Activated CD4-positive, alpha-beta T cell treated with anti-CD3 and anti-CD28 coated beads for 36 hours (primary cell): ENCODE measurements at regions of chr21 and their contacts with region 1.

Region 1: DNA sequence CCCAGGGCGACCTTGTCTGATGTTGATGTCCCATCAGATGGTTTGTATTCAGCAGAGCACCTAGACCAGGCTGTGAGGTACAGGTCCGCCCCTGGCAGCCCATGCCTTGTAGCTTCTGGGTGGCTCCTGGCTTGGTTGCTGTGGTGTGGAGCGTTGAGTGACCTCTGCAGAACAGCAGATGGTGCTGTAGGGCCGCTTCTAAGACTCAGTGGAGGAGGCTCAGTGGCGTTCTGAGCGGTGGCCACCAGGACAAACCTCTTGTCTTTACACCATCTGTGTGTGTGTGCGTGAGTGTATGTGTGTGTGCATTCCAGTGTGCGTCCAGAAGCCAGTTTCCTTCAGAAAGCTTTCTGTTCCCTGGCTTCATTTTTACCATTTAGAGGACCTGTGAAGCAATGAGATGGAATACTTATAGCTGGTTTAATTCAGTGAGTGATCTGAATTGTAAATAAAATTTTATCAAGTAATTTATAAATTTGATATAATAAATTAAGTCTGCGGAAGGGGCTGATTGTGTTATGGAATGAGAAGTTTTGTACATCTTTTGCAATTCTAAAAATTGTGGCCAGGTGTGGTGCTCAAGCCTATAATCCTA is 66.1 kb downstream of the ADARB1 start:
- DNase-seq: peak; percentile 82
- ATAC-seq: peak; percentile 94
- H3K4me3 Mint-ChIP-seq: no peak overlapping the region
- H3K27ac Mint-ChIP-seq: no peak overlapping the region
- H3K4me1 Mint-ChIP-seq: peaks cover 9% of the 10 kb centered on the region
- H3K27me3 Mint-ChIP-seq: no peaks in the 10 kb centered on the region

Region 2: DNA sequence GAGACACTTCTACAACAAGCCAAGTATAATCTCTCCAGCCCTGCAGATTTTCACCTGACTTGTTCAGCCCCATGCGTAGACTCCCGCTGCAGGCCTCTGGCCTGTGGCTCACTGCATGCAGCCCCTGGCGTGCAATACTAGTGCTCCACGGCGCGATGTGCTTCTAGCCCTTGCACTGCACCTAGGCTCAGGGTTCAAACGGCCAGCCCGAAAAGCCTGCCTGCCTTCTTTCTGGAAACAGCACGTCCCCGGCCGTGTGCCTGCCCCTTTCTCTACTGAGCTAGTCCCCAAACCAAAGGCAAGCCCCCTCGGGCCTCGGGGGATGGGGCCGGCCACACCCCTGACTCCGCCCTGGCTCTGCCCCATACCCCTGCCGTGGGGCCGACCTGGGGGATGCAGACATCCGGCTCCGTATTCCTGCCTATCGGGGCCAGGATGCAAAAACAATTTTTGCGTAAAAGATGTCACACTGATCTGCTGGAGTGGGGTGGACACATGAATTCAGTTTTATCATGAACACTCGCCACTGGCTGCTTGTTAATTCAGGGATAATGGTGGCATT is 1154.7 kb before region 1 on chr21:
- CTCF ChIA-PET with region 1: no interaction called
- POLR2A ChIA-PET with region 1: no interaction called
- intact Hi-C with region 1: no loop called
- DNase-seq: peak; percentile 19
- ATAC-seq: peak; percentile 29
- H3K4me3 Mint-ChIP-seq: no peak overlapping the region
- H3K27ac Mint-ChIP-seq: no peak overlapping the region
- H3K4me1 Mint-ChIP-seq: peaks cover 20% of the 10 kb centered on the region
- H3K27me3 Mint-ChIP-seq: no peaks in the 10 kb centered on the region

Region 3: GRCh38 chr21:44962403-44962966 is 178.0 kb before region 1 on chr21:
- CTCF ChIA-PET with region 1: interaction called, 11 read pairs
- POLR2A ChIA-PET with region 1: no interaction called
- intact Hi-C with region 1: loop called in 1 of 2 experiments (anchors 5 kb)
- DNase-seq: no peak
- ATAC-seq: no peak
- H3K4me3 Mint-ChIP-seq: no peak overlapping the region
- H3K27ac Mint-ChIP-seq: no peak overlapping the region
- H3K4me1 Mint-ChIP-seq: peaks cover 32% of the 10 kb centered on the region
- H3K27me3 Mint-ChIP-seq: no peaks in the 10 kb centered on the region

Region 4: GRCh38 chr21:45098867-45099266 is 41.6 kb before region 1 on chr21:
- CTCF ChIA-PET with region 1: interaction called, 15 read pairs
- POLR2A ChIA-PET with region 1: no interaction called
- intact Hi-C with region 1: no loop called
- DNase-seq: no peak
- ATAC-seq: peak; percentile 51
- H3K4me3 Mint-ChIP-seq: no peak overlapping the region
- H3K27ac Mint-ChIP-seq: peak overlapping the region; percentile 14
- H3K4me1 Mint-ChIP-seq: peaks cover 45% of the 10 kb centered on the region
- H3K27me3 Mint-ChIP-seq: no peaks in the 10 kb centered on the region

Region 5: GRCh38 chr21:45120975-45121374 is 19.5 kb before region 1 on chr21:
- CTCF ChIA-PET with region 1: interaction called, 131 read pairs
- POLR2A ChIA-PET with region 1: no interaction called
- intact Hi-C with region 1: no loop called
- DNase-seq: no peak
- ATAC-seq: no peak
- H3K4me3 Mint-ChIP-seq: no peak overlapping the region
- H3K27ac Mint-ChIP-seq: no peak overlapping the region
- H3K4me1 Mint-ChIP-seq: peaks cover 17% of the 10 kb centered on the region
- H3K27me3 Mint-ChIP-seq: no peaks in the 10 kb centered on the region

Region 6: DNA sequence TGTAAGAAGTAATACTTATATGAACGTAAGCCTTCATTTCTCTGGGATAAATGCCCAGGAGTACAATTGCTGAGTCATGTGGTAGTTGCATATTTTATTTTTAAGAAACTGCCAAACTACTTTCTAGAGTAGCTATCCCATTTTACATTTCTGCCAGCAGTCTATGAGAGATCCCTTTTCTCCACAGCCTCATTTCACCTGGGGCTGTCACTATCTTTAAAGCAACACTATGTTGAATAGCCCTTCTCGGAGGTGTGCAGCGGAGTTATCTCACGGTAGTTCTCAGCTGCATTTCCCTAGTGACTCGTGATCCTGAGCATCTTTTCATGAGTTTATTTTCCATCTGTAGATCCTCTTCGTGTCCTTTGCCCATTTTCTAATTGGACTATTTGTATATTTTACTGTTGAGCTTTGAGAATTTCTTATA is 27.4 kb after region 1 on chr21:
- CTCF ChIA-PET with region 1: interaction called, 10 read pairs
- POLR2A ChIA-PET with region 1: no interaction called
- intact Hi-C with region 1: no loop called
- DNase-seq: no peak
- ATAC-seq: no peak
- H3K4me3 Mint-ChIP-seq: no peak overlapping the region
- H3K27ac Mint-ChIP-seq: no peak overlapping the region
- H3K4me1 Mint-ChIP-seq: peaks cover 20% of the 10 kb centered on the region
- H3K27me3 Mint-ChIP-seq: no peaks in the 10 kb centered on the region